Activated CD8-positive, alpha-beta T cell treated with anti-CD3 and anti-CD28 coated beads for 36 hours (primary cell): ENCODE measurements at regions of chr22 and their contacts with region 1.

Region 1: GRCh38 chr22:44180706-44181032 is at the start of gene PARVG:
- DNase-seq: peak; percentile 59
- ATAC-seq: peak; percentile 41
- H3K4me3 Mint-ChIP-seq: peak within 1 kb of the TSS; percentile 94
- H3K27ac Mint-ChIP-seq: peak within 1 kb of the TSS; percentile 98
- H3K4me1 Mint-ChIP-seq: peaks cover 28% of the 10 kb centered on the region
- H3K27me3 Mint-ChIP-seq: no peaks in the 10 kb centered on the region
- CTCF ChIP-seq: no peak
- total RNA-seq, gene PARVG: 76.5 to 76.9 TPM

Region 2: GRCh38 chr22:44192098-44192810 is 11.6 kb after region 1 on chr22:
- CTCF ChIA-PET with region 1: interaction called, 5 read pairs
- POLR2A ChIA-PET with region 1: interaction called, 59 read pairs
- intact Hi-C with region 1: no loop called
- DNase-seq: peak; percentile 75
- ATAC-seq: peak; percentile 32
- H3K4me3 Mint-ChIP-seq: no peak overlapping the region
- H3K27ac Mint-ChIP-seq: no peak overlapping the region
- H3K4me1 Mint-ChIP-seq: peaks cover 45% of the 10 kb centered on the region
- H3K27me3 Mint-ChIP-seq: no peaks in the 10 kb centered on the region
- CTCF ChIP-seq: no peak

Region 3: DNA sequence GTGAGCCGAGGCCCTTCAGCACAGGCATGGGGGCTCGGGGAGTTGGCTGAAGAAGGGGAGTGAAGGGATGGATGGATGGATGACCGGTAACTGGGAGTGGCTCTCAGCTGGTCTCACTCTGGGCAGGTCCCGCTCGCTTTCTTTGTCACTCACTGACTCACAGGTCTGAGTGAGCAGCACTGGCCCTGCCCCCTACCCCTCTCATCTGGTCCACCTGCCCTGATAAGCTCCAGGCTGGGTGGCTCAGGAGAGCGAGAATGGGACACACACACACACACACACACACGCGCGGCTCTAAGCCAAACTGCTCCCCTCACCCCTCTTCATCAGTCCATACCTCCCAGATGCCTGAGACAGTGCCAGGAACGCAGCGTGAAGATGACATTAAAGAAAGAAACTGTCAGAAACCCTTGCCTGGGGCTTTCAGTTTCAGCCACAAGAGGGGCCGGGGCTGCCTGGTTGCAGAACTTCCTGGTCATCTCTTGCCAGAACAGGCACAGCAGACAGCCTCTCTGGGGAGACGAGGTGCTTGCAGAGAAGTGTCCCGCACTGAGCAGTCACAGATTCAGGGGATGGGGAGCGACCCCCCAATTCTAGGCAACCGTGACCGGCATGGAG is 148.6 kb after region 1 on chr22:
- CTCF ChIA-PET with region 1: no interaction called
- POLR2A ChIA-PET with region 1: no interaction called
- intact Hi-C with region 1: loop called (anchors 10 kb)
- DNase-seq: peak; percentile 61
- ATAC-seq: peak; percentile 69
- H3K4me3 Mint-ChIP-seq: no peak overlapping the region
- H3K27ac Mint-ChIP-seq: no peak overlapping the region
- H3K4me1 Mint-ChIP-seq: peaks cover 24% of the 10 kb centered on the region
- H3K27me3 Mint-ChIP-seq: peaks cover 49% of the 10 kb centered on the region
- CTCF ChIP-seq: no peak

Region 4: GRCh38 chr22:44625981-44626687 is 445.5 kb after region 1 on chr22:
- CTCF ChIA-PET with region 1: interaction called, 11 read pairs
- POLR2A ChIA-PET with region 1: no interaction called
- intact Hi-C with region 1: no loop called
- DNase-seq: peak; percentile 83
- ATAC-seq: peak; percentile 85
- H3K4me3 Mint-ChIP-seq: no peak overlapping the region
- H3K27ac Mint-ChIP-seq: no peak overlapping the region
- H3K4me1 Mint-ChIP-seq: peaks cover 6% of the 10 kb centered on the region
- H3K27me3 Mint-ChIP-seq: no peaks in the 10 kb centered on the region
- CTCF ChIP-seq: peak; percentile 98